Sigmoid colon (tissue), 7 donors: ENCODE measurements at regions of chr1 and their contacts with region 1.

Region 1: DNA sequence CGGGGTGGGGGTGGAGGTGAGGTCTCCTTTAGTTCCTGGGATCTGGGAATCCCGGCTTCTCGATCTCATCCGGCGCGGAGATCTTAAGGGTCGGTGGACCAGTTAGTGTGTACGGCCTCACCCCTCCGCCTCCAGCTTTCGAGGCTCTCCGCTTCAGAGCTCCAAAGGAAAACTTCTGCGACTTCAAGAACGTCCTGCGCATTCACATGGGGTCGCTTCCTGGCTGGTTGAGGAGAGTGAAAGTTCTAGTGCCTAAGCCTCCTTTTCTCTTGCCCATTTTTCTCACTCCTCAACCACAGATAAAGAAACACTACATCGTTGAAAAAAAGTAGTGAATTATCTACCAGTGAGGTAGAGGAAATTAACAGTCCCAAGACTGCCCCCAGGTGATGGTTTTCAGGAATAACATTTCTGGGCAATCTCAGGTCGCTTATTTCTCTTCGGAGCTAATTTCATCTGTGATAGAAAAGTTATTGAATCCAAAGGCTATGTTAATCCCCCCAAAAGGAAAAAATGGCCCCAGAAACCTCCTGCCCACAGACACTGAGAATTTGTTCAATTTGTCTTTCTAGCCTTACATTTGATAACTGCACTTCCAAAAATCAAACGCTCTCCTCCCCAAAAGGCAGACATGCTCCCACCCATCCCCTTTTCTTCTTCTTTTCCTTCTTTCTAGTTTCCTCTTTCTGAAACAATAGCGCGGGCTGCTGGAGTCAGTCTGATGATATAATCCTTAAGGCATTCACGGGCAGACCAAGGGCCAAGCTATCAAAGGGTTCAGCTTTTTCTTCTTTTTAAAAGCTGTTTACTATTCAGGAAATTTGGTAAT is 20.6 kb upstream of the TBX15 start:
- DNase-seq: no peak
- H3K4me3 ChIP-seq: peak overlapping the region in 3 of 4 donors; percentile 33 to 40 (median 38)
- H3K27ac ChIP-seq: no peak overlapping the region
- H3K4me1 ChIP-seq: peaks cover 0 to 29% (median 26%) of the 10 kb centered on the region in 4 donors
- H3K27me3 ChIP-seq: peaks cover 42 to 69% (median 58%) of the 10 kb centered on the region in 3 donors
- CTCF ChIP-seq: peak in 3 of 4 experiments; percentile 43 to 67 (median 46)
- EP300 ChIP-seq: no peak
- POLR2A ChIP-seq: no peak

Region 2: DNA sequence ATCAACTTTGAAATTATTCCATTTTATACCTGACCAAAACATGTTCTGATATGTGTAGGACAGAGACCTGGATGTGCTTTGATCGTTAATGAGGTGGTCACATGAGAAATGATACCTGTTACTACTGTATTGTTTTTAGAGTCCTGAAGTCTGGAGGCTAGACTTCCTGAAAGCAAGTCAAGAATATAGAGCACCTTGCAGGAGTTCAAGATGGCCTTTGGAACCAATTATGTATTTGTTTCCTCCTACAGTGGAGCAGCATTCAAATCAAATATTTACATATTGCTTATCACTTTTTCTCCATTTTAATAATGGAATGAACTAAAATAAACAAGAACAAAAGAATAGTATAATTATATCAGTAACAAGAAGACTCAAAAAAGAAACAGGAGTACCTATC is 1485.6 kb before region 1 on chr1:
- intact Hi-C with region 1: no loop called
- DNase-seq: no peak
- H3K4me3 ChIP-seq: no peak overlapping the region
- H3K27ac ChIP-seq: no peak overlapping the region
- H3K4me1 ChIP-seq: peaks cover 0 to 11% (median 9%) of the 10 kb centered on the region in 4 donors
- H3K27me3 ChIP-seq: no peaks in the 10 kb centered on the region
- CTCF ChIP-seq: no peak
- EP300 ChIP-seq: no peak
- POLR2A ChIP-seq: no peak

Region 3: DNA sequence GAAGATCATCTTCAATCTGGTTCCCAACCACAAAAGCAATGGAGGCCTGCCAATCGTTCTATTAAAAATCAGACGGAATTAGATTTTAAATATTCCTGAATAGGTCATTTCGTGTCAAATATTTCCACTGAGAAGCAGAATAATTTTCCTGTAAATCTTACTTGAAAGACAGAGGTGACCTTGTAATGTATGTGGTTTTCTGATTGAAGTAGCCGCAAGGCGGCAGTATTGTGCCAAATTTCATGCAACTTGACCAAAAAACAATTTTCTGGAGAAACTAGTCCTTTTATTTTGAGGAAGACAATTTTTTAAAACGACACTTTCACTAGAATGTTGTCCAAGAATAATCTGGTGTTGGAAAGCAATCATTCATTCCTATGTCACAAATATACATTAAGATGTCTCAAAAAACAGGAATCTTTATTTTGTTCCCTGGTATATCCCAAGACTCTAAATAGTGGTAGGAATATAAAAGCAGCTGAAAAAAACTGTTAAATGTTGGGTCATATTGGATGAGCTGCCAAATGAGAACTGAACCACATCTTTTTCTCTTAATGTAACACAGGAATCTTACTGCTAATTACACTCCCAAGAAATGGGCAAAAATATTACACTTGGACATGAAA is 857.3 kb before region 1 on chr1:
- intact Hi-C with region 1: loop called (anchors 2 kb)
- DNase-seq: no peak
- H3K4me3 ChIP-seq: no peak overlapping the region
- H3K27ac ChIP-seq: no peak overlapping the region
- H3K4me1 ChIP-seq: no peaks in the 10 kb centered on the region
- H3K27me3 ChIP-seq: no peaks in the 10 kb centered on the region
- CTCF ChIP-seq: peak in 3 of 4 experiments; percentile 34 to 54 (median 48)
- EP300 ChIP-seq: no peak
- POLR2A ChIP-seq: no peak

Region 4: DNA sequence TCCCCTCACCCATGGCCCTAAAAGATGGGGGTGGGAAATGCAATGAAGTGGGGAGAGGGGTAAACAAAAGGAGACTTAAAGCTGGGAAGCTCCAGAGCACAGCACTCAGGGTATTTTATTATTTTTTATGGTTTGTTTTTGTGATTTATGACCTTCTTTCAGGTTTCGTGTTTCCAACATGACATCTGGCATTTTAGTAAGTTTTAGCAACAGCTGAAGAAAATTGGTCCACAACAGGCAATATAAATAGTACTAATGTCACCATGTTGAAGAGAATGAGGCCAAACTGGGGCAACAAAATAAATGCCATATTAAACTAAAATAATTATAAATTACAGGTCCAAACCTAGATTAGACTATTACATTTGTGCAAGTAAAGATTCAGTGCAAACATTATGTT is 76.8 kb before region 1 on chr1:
- intact Hi-C with region 1: no loop called
- DNase-seq: no peak
- H3K4me3 ChIP-seq: no peak overlapping the region
- H3K27ac ChIP-seq: no peak overlapping the region
- H3K4me1 ChIP-seq: no peaks in the 10 kb centered on the region
- H3K27me3 ChIP-seq: no peaks in the 10 kb centered on the region
- CTCF ChIP-seq: no peak
- EP300 ChIP-seq: no peak
- POLR2A ChIP-seq: no peak

Region 5: GRCh38 chr1:119040906-119041305 is 32.2 kb after region 1 on chr1:
- intact Hi-C with region 1: no loop called
- DNase-seq: peak; percentile 76
- H3K4me3 ChIP-seq: no peak overlapping the region
- H3K27ac ChIP-seq: no peak overlapping the region
- H3K4me1 ChIP-seq: no peaks in the 10 kb centered on the region
- H3K27me3 ChIP-seq: no peaks in the 10 kb centered on the region
- CTCF ChIP-seq: no peak
- EP300 ChIP-seq: no peak
- POLR2A ChIP-seq: no peak